ENCODE measurements at regions of chrX and their contacts with region 1.

Region 1: DNA sequence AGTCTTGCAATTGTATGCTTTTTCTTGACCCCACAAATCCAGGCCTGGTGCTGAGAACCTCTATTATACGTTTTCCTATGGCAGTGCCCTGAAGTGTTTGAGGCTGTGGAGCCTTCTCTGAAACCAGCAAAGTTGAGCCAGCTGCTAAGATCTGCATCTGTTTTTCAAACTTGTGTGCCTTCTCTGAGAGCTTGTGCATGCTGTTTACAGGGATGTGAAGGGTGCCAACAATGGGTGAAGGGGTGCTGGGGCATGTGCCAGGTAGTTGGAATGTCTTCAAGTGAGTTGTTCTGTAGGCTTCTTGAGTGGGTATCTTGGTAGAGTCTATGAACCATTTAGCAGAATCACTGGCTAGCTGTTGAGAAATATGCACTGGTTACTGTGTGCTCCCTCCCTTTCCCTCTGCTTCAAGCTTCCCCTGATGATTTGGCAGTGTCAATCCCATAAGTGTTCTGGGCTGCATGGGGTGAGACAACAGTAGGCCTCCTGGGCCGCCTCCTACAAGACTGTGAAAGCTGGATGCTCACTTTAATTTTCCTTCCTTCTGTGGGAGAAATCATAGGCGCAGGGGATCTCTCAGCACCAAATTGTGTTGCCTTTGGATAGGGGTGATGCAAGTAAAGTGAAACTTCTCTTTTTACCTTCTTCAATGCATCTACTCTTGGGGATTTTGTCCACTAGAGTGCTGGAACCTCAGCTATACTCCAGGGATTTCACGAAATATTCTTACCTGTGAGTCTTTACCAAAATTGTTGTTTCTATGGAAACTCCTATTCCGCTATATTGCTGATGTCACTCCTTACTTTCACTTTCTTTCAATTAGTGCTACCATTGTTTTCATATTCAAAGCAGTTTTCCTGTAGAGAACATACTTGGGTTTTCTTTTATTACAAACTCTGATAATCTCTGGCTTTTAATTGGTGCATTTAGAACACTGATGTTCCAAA is 30.0 kb downstream of the ITM2A start:
- DNase-seq: peak; percentile 56
- H3K4me3 Mint-ChIP-seq: peak overlapping the region; percentile 77
- H3K27ac Mint-ChIP-seq: peak overlapping the region; percentile 76
- H3K4me1 Mint-ChIP-seq: peaks cover 21% of the 10 kb centered on the region
- H3K27me3 Mint-ChIP-seq: no peaks in the 10 kb centered on the region

Region 2: GRCh38 chrX:79325263-79325958 is 11.7 kb before region 1 on chrX:
- intact Hi-C with region 1: loop called (anchors 1 kb)
- DNase-seq: peak; percentile 83
- H3K4me3 Mint-ChIP-seq: peak overlapping the region; percentile 82
- H3K27ac Mint-ChIP-seq: peak overlapping the region; percentile 78
- H3K4me1 Mint-ChIP-seq: peaks cover 12% of the 10 kb centered on the region
- H3K27me3 Mint-ChIP-seq: no peaks in the 10 kb centered on the region

Measured in activated CD4-positive, alpha-beta T cell treated with anti-CD3 and anti-CD28 coated beads, Interleukin-2, amount 10 ng/mL, durations not matched to agents 24 days and 14 days (primary cell).